PC-9 (cell line): ENCODE measurements at regions of chr5 and their contacts with region 1.

Region 1: GRCh38 chr5:6632917-6633468 is at the starts of genes NSUN2 and SRD5A1:
- DNase-seq: peak; percentile 79 to 99
- H3K4me3 ChIP-seq: peak within 1 kb of the TSS; percentile 72
- H3K27ac ChIP-seq: peak within 1 kb of the TSS; percentile 83
- H3K4me1 ChIP-seq: peaks cover 22% of the 10 kb centered on the region
- H3K27me3 ChIP-seq: no peaks in the 10 kb centered on the region
- CTCF ChIP-seq: no peak
- total RNA-seq, gene NSUN2: 148 and 155 TPM in 2 replicates
- total RNA-seq, gene SRD5A1: 52.3 and 56.7 TPM in 2 replicates

Region 2: GRCh38 chr5:6377905-6378765 is 254.9 kb before region 1 on chr5 and contains the start of gene MED10:
- CTCF ChIA-PET with region 1: no interaction called
- POLR2A ChIA-PET with region 1: interaction called, 4 read pairs
- intact Hi-C with region 1: loop called (anchors 1 kb)
- DNase-seq: peak; percentile 87 to 98
- H3K4me3 ChIP-seq: peak within 1 kb of the TSS; percentile 93
- H3K27ac ChIP-seq: peak within 1 kb of the TSS; percentile 59
- H3K4me1 ChIP-seq: peaks cover 18% of the 10 kb centered on the region
- H3K27me3 ChIP-seq: no peaks in the 10 kb centered on the region
- CTCF ChIP-seq: no peak
- total RNA-seq, gene MED10: 81.8 and 82.0 TPM in 2 replicates

Region 3: DNA sequence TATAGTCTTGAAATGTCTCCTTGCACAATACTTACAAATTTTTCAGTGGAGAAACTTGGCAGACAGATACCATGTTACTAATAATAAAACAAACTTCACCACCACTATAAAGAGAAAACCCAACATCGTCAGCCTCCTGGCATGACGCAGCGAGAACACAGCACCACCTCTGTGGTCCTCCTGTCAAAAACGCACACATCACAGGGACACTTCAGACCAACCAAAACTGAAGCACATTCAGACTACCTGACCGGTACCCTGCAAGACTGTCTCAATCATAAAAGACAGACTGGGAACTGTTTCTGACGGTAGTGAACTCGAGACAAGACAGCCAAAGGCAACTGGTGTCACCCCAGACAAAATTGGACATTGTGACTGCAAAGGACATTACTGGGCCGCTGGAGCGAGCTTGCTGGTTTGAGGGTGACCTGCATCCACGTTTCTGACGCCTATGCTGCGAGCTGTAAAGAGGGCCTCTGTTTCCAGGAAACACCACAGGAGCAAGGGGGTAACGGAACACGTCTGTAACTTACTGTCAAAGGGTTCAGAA is 34.6 kb before region 1 on chr5:
- CTCF ChIA-PET with region 1: no interaction called
- POLR2A ChIA-PET with region 1: no interaction called
- intact Hi-C with region 1: no loop called
- DNase-seq: no peak
- H3K4me3 ChIP-seq: no peak overlapping the region
- H3K27ac ChIP-seq: no peak overlapping the region
- H3K4me1 ChIP-seq: no peaks in the 10 kb centered on the region
- H3K27me3 ChIP-seq: no peaks in the 10 kb centered on the region
- CTCF ChIP-seq: no peak

Region 4: DNA sequence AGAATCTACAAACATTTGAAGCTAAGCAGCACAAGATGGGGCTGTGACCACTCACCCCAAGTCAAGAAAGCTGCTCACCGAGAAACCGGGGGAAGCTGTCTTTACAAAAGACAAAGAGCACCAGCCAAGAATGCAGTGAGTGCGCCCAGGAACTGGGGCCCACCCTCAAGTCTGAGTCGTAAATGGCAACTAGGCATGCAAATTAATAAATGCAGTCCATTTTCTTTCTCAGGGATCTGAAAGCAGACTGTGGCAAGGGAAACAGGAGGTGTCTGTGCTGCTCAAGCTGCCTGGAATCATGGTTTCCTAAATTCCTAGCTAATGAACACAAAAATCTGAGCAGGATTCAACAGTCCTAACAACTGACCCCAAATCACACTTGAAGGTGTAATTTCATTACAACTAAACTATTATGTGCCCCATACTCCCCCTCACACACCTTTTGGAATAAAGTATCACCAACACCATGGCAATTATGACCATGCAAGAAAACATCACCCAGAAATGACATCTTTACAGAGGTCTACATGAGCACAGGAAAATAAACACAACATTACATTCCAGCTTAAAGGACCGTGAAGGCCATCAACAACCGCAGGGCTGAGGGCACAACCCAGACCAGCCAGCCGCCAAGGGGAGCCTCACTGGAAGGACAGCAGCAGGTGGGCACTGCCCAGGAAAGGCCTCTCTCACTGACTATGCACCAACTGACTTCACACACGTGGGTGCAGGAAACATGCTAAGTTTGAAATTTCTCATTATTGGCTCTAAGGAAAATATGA is 17.8 kb before region 1 on chr5:
- CTCF ChIA-PET with region 1: no interaction called
- POLR2A ChIA-PET with region 1: no interaction called
- intact Hi-C with region 1: loop called (anchors 1 kb)
- DNase-seq: no peak
- H3K4me3 ChIP-seq: no peak overlapping the region
- H3K27ac ChIP-seq: no peak overlapping the region
- H3K4me1 ChIP-seq: no peaks in the 10 kb centered on the region
- H3K27me3 ChIP-seq: no peaks in the 10 kb centered on the region
- CTCF ChIP-seq: no peak

Region 5: DNA sequence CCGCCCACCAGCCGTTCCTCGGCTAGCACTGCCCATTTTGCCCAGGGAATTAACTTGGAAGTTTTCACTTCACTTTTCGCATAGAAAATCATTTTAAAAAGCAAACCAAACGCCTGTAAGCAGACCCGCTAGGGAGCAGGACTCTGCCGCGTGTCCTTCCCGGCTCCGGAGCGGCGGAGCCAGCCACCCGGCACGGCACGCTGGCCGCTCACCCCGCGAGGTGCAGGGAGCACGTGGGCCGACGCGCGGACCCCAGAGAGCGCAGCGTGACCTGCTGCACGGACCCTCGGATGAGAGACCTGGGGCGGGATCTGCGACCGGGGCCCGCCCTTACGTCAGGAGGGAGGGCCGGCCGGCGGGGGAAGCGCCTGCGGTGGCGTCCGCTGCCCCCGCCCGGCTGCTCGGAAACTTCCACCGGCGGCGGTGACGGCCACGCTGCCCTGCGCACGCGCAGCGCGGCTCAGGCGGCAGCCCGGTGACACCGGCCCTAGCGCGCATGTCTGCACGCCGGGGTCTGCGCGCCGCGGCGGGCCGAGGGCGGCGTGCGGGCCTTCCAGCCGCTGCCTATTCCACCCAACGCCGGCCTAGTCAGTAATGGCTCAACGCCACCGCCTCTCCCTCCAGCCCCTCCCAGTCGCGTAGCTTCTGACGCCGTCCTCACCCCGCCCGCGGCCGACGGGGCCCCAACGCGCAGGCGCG is 79.7 kb after region 1 on chr5:
- CTCF ChIA-PET with region 1: no interaction called
- POLR2A ChIA-PET with region 1: interaction called, 7 read pairs
- intact Hi-C with region 1: loop called (anchors 1 kb)
- DNase-seq: peak; percentile 92 to 100
- H3K4me3 ChIP-seq: peak overlapping the region; percentile 72
- H3K27ac ChIP-seq: peak overlapping the region; percentile 88
- H3K4me1 ChIP-seq: peaks cover 32% of the 10 kb centered on the region
- H3K27me3 ChIP-seq: no peaks in the 10 kb centered on the region
- CTCF ChIP-seq: 0 out of 2 replicates have a peak, but pooled peaks have one; percentile 15

Region 6: DNA sequence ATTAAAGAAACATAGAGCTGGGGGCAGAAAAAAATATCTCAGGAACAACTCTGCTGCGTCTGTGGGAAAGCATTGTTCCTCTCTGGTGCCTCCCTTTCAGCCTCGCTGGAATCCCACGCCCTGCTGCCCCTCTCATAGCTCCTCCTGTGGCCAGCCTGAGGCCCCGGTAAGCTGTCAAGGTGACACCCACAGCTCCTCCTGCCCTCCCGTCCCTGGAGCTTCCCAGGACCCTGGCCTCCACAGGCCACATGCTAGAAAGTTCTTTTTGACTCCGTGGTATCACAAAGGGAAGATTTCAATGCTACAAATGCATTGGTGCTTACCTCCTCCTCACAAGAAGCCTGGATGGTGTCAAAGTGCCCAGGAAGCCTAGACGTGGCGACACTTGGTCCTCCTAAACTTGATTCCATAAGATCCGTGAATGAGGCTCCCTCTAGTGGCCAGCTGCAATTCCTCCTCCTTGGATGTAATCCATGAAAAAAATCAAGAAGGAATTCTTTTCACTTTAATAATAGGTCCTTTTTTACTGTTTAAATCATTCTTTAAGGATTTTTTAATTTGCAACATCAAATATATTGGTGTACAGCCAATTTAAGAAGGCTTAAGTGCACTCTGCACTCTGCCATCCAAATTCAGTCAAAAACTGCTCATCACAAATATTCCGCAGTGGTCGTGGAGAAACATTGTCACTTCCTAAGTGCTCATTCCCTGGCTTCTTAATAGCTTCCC is 1113.1 kb after region 1 on chr5:
- CTCF ChIA-PET with region 1: no interaction called
- POLR2A ChIA-PET with region 1: no interaction called
- intact Hi-C with region 1: loop called (anchors 5 kb)
- DNase-seq: peak; percentile 52 to 76
- H3K4me3 ChIP-seq: no peak overlapping the region
- H3K27ac ChIP-seq: no peak overlapping the region
- H3K4me1 ChIP-seq: no peaks in the 10 kb centered on the region
- H3K27me3 ChIP-seq: peaks cover 40% of the 10 kb centered on the region
- CTCF ChIP-seq: peak; percentile 98

Region 7: DNA sequence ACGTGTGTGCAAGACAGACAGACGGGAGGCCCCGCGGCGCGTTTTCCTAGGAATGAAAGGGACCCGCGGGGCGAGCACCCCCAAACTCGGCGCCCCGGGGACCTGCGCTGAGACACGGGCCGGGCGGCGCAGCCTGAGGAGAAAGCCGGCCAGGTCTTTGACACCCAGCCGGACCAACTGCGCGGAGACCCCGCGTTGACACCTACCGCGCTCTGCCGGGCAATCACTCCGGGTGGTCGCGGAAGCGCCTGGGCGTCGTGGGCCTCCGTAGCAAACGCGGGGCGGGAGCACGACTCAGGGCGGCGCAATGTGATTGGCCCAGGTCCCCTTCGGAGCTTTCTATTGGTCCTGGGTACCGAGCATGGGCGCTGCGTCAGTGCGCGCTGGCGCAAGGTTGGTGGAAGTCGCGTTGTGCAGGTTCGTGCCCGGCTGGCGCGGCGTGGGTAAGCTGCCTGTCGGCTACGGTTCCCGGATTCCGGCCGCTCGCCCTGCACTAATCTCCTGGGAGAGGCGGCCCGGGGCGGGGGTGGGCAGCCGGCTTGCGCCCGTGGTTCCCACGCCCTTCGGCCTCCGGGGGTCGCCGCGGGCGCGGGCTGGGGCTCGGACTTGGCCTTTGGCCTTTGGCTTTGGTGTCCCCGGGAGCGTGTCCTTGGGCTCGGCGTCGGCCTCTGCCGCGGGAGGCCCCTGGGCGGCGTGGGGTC is 1235.9 kb after region 1 on chr5 and contains the starts of genes FASTKD3 and MTRR:
- CTCF ChIA-PET with region 1: no interaction called
- POLR2A ChIA-PET with region 1: interaction called, 9 read pairs
- intact Hi-C with region 1: loop called (anchors 10 kb)
- DNase-seq: peak; percentile 90 to 97
- H3K4me3 ChIP-seq: peak within 1 kb of the TSS; percentile 100
- H3K27ac ChIP-seq: peak within 1 kb of the TSS; percentile 48
- H3K4me1 ChIP-seq: peaks cover 15% of the 10 kb centered on the region
- H3K27me3 ChIP-seq: no peaks in the 10 kb centered on the region
- CTCF ChIP-seq: no peak
- total RNA-seq, gene FASTKD3: 17.6 and 20.6 TPM in 2 replicates
- total RNA-seq, gene MTRR: 71.5 and 72.6 TPM in 2 replicates